SK-N-SH (cell line): ENCODE measurements at regions of chr3 and their contacts with region 1.

Region 1: GRCh38 chr3:128584412-128585020 is 66.1 kb downstream of the RPN1 start:
- DNase-seq: peak; percentile 94
- H3K4me3 ChIP-seq: no peak overlapping the region
- H3K27ac ChIP-seq: peak overlapping the region in 1 of 2 experiments; percentile 43; a peak in 2 of 4 replicates
- H3K4me1 ChIP-seq: peaks cover 0 to 10% of the 10 kb centered on the region in 2 experiments; a peak in 1 of 4 replicates
- H3K27me3 ChIP-seq: no peaks in the 10 kb centered on the region
- CTCF ChIP-seq: peak; percentile 82
- EP300 ChIP-seq: no peak; a peak in 1 of 4 replicates
- RAD21 ChIP-seq: peak; percentile 99

Region 2: DNA sequence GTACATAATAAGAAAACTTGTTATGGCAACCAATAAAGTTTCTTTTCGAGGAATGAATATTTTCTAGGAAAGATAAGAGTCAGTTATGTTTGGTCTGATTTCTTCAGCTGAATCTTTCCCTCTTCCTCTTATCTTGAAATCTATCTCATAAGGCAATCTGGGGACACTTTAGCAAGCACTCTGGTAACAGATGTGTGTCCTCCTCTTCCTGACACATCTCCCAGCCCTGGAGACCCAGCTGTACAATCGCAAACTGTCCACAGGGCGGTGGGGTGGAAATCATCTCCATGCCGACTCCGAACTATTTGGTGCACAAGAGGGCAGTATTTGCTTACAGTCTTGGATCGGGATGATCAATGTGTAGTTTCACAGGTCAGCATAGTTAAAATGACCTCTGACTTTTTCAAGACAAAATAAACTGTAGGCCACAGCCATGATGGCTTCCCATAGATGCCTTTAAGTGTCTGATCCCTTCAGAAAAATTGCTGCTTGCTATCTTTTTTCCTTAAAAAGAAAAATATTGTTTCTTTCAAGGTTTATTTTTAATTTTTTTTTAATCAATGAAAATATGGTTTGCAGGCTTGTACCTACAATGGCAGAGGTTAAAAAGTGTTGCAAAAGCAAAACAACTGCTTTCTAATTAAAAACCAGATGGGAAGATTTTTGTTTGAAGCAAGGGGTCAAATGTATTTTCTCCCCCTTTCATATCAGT is 413.6 kb before region 1 on chr3:
- CTCF ChIA-PET with region 1: interaction called, 23 read pairs
- POLR2A ChIA-PET with region 1: no interaction called
- DNase-seq: peak; percentile 80
- H3K4me3 ChIP-seq: no peak overlapping the region; a peak in 1 of 4 replicates
- H3K27ac ChIP-seq: peak overlapping the region in 1 of 2 experiments; percentile 76; a peak in 2 of 4 replicates
- H3K4me1 ChIP-seq: peaks cover 0 to 73% of the 10 kb centered on the region in 2 experiments; a peak in 2 of 4 replicates
- H3K27me3 ChIP-seq: no peaks in the 10 kb centered on the region
- CTCF ChIP-seq: peak; percentile 92
- EP300 ChIP-seq: peak in 1 of 2 experiments; percentile 40; a peak in 1 of 4 replicates
- RAD21 ChIP-seq: peak; percentile 98

Region 3: DNA sequence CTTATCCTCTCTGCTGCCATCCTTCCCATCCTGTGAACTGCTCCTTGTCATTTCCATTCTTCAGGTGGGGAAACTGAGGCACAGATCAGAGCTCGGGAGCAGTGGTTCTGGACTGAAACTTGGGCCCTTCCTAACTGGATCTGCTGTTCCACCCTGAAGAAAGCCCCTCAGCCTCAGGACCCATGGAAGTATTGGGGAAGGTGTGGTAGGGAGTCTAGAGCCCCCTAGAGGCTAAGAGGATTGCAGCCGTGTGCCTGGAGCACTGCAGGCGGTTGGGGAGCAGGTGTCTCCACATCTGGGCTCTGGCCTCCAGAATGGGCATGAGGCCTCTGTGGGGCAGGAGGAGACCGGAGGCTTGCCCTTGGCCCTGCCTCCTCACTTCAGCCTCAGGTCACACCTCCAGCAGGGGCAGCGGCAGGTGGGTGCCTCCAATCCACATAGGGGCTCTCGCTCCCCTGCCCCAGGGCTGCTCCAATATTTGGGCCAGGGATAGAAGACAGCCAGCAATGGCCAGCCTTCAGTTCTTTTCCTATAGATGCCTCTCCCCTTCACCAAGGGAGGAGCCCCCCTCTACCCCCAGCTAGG is 145.9 kb before region 1 on chr3:
- CTCF ChIA-PET with region 1: interaction called, 10 read pairs
- POLR2A ChIA-PET with region 1: no interaction called
- DNase-seq: peak; percentile 41
- H3K4me3 ChIP-seq: no peak overlapping the region
- H3K27ac ChIP-seq: no peak overlapping the region
- H3K4me1 ChIP-seq: peaks cover 0 to 30% of the 10 kb centered on the region in 2 experiments; a peak in 1 of 4 replicates
- H3K27me3 ChIP-seq: no peaks in the 10 kb centered on the region
- CTCF ChIP-seq: peak; percentile 51
- EP300 ChIP-seq: no peak
- RAD21 ChIP-seq: no peak

Region 4: DNA sequence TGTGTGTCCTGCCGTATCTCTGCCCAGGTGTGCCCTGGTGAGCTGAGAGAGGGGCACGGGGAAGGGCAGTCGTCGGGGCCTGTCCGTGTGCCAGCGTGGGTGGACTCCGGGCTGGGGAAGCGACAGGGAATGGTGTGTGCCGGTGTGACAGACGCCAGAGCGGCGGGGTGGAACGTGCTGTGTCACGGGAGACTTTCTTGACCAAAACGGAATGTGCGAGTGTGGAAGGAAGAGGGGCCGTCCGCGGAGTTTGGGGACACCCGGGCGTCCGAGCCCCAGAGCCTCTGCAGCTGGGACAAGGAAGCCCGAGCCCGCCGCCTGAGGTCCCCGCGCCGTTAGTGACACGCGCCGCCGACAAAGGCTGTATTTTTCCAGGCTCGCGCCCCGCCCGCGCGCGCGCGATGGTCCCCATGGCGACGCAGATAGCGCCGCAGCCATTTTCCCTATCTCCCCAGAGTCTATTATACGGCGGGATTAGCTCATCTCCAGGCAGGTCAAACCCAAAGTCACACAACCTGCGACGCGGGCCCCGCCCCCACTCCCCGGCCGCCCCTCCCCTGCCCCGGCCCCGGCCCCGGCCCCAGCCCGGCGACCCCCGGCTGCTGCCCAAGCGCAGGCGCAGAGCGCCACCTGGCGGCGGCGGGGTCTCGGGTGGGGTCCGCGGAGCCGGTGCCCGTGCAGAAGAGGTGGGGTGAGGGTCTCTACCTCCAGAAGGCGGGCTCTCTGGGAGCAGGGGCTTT is 87.0 kb before region 1 on chr3:
- CTCF ChIA-PET with region 1: interaction called, 32 read pairs
- POLR2A ChIA-PET with region 1: interaction called, 6 read pairs
- DNase-seq: peak; percentile 95
- H3K4me3 ChIP-seq: peak overlapping the region; percentile 44 to 58
- H3K27ac ChIP-seq: peak overlapping the region in 1 of 2 experiments; percentile 97; a peak in 2 of 4 replicates
- H3K4me1 ChIP-seq: peaks cover 0 to 47% of the 10 kb centered on the region in 2 experiments; a peak in 1 of 4 replicates
- H3K27me3 ChIP-seq: peaks cover 3% of the 10 kb centered on the region; the same call in 1 of the 2 replicates
- CTCF ChIP-seq: peak; percentile 74
- EP300 ChIP-seq: peak in 1 of 2 experiments; percentile 8; a peak in 1 of 4 replicates
- RAD21 ChIP-seq: peak; percentile 64

Region 5: DNA sequence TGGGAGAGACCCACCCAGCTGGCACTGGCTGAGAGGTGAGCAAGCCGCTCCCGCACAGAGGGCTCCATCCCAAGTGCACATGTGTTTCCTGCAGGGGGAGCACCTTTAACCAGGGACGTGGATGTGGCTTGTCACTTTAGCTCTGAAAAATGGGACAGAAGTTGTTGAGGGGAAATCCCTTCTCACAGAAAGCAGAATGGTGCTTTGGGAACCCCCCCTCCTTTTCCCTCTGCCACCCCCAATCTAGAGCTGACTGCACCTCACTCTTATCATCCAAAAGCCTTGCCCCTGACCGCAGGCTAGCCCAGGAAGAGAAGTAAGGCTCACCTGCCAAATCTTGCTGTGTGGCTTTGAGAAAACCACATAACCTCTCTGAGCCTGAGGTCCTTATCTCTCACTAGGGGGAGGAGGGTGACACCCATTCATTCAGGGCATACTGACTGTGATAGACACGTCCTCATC is 11.8 kb before region 1 on chr3:
- CTCF ChIA-PET with region 1: interaction called, 16 read pairs
- POLR2A ChIA-PET with region 1: no interaction called
- DNase-seq: peak; percentile 70
- H3K4me3 ChIP-seq: no peak overlapping the region
- H3K27ac ChIP-seq: no peak overlapping the region
- H3K4me1 ChIP-seq: peaks cover 0 to 10% of the 10 kb centered on the region in 2 experiments; a peak in 1 of 4 replicates
- H3K27me3 ChIP-seq: no peaks in the 10 kb centered on the region
- CTCF ChIP-seq: peak; percentile 39
- EP300 ChIP-seq: no peak
- RAD21 ChIP-seq: no peak

Region 6: DNA sequence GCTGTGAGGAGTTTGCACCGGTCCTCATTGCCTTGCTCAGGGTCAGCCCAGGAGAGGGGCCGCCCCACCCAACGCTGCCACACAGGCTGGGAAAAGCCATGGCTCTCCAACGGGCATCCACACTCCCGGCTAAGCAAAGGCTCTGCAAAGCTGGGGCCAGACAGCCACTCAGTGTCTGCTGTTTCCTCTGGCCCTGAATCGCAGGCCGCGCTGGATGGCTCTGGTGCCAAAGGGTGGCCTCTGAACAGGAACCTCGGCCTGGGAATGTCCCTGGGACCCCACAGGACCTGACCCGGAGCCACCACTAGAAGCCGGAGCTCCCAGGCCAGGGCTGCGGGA is 23.2 kb after region 1 on chr3:
- CTCF ChIA-PET with region 1: interaction called, 33 read pairs
- POLR2A ChIA-PET with region 1: no interaction called
- DNase-seq: no peak
- H3K4me3 ChIP-seq: no peak overlapping the region
- H3K27ac ChIP-seq: no peak overlapping the region
- H3K4me1 ChIP-seq: peaks cover 0 to 22% of the 10 kb centered on the region in 2 experiments; a peak in 1 of 4 replicates
- H3K27me3 ChIP-seq: no peaks in the 10 kb centered on the region
- CTCF ChIP-seq: no peak
- EP300 ChIP-seq: no peak
- RAD21 ChIP-seq: no peak

Region 7: DNA sequence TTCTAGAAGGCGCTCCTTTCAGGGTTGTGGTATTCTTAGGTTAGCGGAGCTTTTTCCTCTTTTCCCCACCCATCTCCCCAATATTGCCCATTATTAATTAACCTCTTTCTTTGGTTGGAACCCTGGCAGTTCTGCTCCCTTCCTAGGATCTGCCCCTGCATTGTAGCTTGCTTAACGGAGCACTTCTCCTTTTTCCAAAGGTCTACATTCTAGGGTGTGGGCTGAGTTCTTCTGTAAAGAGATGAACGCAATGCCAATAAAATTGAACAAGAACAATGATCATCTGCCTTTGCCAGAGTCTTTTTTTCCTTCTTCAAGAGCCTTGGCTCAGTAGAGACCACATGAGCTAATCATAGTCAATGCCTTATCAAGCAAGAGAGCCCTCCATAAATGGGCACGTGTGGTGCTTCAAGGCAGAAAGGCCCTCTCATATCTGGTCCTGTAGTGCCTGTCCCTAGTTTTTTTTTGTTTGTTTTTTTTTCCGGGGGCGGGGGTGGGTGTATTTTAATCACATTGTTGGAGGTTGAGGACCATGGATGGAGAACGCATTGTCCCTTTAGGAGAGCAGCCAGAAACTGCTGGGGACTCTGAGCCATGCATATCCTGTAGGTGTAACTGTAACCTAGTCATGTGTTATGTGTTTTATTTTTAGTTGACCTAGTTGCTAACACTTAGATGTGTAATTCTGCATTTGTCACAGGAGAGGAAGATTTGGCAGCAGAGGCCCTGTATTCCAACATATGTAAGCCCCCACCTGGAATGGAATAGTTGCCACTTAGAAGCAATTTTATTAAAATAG is 230.2 kb after region 1 on chr3:
- CTCF ChIA-PET with region 1: no interaction called
- POLR2A ChIA-PET with region 1: no interaction called
- DNase-seq: no peak
- H3K4me3 ChIP-seq: no peak overlapping the region
- H3K27ac ChIP-seq: no peak overlapping the region
- H3K4me1 ChIP-seq: no peaks in the 10 kb centered on the region
- H3K27me3 ChIP-seq: no peaks in the 10 kb centered on the region
- CTCF ChIP-seq: no peak
- EP300 ChIP-seq: no peak
- RAD21 ChIP-seq: no peak